HEK293 (cell line): ENCODE measurements at regions of chr20 and their contacts with region 1.

Region 1: GRCh38 chr20:46013826-46014516 is 5.3 kb downstream of the MMP9 start:
- H3K4me3 ChIP-seq: peak overlapping the region; percentile 24
- H3K27ac ChIP-seq: no peak overlapping the region
- H3K4me1 ChIP-seq: no peaks in the 10 kb centered on the region
- CTCF ChIP-seq: peak; percentile 79; the same call in 1 of the 2 replicates

Region 2: GRCh38 chr20:45564760-45565276 is 449.2 kb before region 1 on chr20:
- CTCF ChIA-PET with region 1: no interaction called
- POLR2A ChIA-PET with region 1: no interaction called
- H3K4me3 ChIP-seq: no peak overlapping the region
- H3K27ac ChIP-seq: no peak overlapping the region
- H3K4me1 ChIP-seq: no peaks in the 10 kb centered on the region
- CTCF ChIP-seq: no peak

Region 3: DNA sequence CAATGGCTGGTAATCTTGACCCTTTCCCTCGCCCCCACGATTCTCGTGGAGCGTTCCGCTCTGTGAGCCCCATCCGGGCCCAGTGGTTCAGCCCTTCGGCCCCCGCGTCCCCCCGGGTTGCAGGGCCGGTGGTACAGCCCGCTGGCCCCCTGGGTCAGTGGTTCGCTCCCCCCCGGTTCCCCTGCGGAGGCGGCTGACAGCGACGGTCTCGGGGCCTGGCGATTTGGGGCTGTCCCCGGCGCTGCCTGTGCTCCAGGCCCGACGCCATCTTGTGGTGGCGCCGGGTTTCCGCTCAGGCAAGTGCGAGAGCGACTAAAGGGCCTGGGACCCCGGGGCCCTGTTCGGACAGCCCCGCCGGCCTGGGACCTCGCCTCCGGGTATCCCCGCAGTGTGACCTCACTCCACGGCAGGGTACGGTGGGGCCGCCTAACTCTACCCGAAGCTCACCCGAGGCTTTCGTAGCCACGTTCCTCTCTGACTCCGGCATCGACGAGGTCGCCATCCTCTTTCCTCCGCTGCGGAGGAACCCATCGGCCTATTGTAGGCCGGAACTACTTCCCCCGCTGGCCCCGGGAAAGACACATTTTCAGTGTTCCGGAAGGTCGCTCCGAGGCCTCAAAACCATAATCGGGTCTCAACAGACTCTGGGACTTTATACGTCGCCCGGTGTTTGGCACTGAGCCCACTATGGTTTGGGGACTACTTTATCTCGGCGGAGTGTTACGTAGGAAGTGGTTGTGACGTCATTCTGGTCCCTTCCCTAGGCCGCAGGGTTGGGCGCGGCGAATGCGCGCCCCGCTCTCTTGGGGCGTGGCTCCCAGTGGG is 42.1 kb before region 1 on chr20 and contains the start of gene ZNF335:
- CTCF ChIA-PET with region 1: interaction called, 24 read pairs
- POLR2A ChIA-PET with region 1: no interaction called
- H3K4me3 ChIP-seq: peak within 1 kb of the TSS; percentile 90
- H3K27ac ChIP-seq: peak within 1 kb of the TSS; percentile 92
- H3K4me1 ChIP-seq: no peaks in the 10 kb centered on the region
- CTCF ChIP-seq: peak; percentile 44; the same call in 1 of the 2 replicates

Region 4: DNA sequence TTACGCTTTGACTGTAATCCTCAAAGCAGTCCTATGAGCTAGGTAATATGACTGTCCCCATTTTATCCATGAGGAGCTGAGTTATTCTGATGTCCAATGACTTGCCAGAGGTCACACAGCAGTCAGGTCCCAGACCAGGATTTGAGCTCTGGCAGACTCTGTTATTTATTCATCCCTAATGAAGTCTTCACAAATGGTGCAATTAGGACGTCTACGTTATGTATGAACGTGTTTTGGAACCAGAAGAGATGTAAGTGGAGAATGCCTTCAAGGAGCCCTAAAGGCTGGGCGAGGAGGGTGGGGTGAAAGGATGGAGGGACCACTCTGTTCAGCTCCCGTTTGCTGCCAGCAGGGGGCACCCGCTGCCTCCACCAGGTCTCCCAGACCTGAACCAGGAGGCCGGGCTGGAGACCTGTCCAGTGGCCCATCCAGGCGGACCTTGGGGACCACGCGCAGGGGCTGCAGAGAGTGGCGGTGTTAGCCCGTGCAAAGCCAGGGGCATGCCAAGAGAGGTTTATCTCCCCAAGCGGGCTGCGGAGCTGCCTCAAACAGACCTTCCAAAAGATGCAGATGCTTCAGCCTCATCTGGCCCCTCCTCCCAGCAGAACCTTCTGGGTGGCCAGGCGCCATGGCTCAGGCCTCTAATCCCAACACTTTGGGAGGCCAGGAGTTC is 26.7 kb before region 1 on chr20:
- CTCF ChIA-PET with region 1: interaction called, 86 read pairs
- POLR2A ChIA-PET with region 1: interaction called, 7 read pairs
- H3K4me3 ChIP-seq: no peak overlapping the region
- H3K27ac ChIP-seq: no peak overlapping the region
- H3K4me1 ChIP-seq: no peaks in the 10 kb centered on the region
- CTCF ChIP-seq: peak; percentile 76

Region 5: DNA sequence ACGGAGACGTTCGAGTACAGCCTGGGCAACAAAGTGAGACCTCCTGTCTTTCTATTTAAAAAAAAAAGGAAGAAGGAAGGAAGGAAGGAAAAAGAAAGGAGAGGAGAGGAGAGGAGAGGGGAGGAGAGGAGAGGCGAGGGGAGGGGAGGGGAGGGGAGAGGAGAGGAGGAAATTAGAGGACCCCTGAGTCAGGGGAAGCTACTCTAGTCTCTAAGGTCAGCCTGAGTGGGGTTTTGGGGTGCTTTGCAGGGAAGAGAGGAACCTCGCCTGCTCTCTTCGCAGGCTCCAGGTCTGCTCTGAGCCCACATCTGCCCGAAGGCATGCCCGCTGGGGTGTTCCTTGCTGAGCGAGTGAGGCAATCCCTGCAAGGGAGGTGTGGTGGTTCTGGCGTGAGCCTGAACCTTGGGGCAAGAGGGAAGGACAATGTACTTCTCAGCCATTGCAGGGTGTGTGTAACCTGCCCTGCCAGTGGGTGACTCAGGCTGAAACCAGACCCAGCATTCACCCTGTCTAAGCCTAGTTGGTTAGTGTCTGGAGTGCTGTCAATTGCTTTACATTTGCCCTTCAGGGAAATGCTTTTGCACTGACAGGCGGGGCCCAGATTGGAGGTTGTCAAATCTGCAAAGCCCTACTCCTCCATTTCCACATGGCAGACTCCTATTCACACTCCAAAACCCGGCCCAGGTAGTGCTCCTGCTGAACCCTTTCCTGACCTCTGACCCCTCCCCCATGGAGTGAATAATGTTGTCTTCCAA is 20.6 kb before region 1 on chr20:
- CTCF ChIA-PET with region 1: interaction called, 86 read pairs
- POLR2A ChIA-PET with region 1: no interaction called
- H3K4me3 ChIP-seq: no peak overlapping the region
- H3K27ac ChIP-seq: no peak overlapping the region
- H3K4me1 ChIP-seq: no peaks in the 10 kb centered on the region
- CTCF ChIP-seq: no peak

Region 6: DNA sequence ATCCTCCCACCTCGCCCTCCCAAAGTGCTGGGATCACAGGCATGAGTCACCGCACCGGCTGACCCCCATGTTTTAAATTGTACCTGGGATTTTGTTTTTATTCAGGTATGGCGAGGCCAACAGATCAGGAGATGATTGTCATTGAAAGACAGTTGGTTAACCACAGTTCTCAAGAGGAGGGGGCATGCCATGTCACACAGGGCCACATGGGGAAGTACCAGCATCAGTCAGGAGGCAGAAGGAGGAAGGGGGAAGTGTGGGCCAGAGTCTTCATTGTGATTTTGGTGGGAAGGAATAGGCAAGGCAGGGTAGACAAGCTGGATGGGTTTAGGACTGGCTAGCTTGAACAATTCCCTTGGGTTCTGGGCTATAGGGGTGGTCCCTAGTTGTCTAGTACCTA is 15.2 kb before region 1 on chr20:
- CTCF ChIA-PET with region 1: interaction called, 49 read pairs
- POLR2A ChIA-PET with region 1: no interaction called
- H3K4me3 ChIP-seq: no peak overlapping the region
- H3K27ac ChIP-seq: no peak overlapping the region
- H3K4me1 ChIP-seq: no peaks in the 10 kb centered on the region
- CTCF ChIP-seq: no peak

Region 7: GRCh38 chr20:46089417-46090388 is 75.7 kb after region 1 on chr20 and contains the start of gene NCOA5:
- CTCF ChIA-PET with region 1: interaction called, 18 read pairs
- POLR2A ChIA-PET with region 1: no interaction called
- H3K4me3 ChIP-seq: peak within 1 kb of the TSS; percentile 95
- H3K27ac ChIP-seq: peak within 1 kb of the TSS; percentile 87
- H3K4me1 ChIP-seq: peaks cover 22% of the 10 kb centered on the region
- CTCF ChIP-seq: peak; percentile 72; the same call in 1 of the 2 replicates

Region 8: GRCh38 chr20:46174469-46175128 is 160.6 kb after region 1 on chr20:
- CTCF ChIA-PET with region 1: interaction called, 10 read pairs
- POLR2A ChIA-PET with region 1: no interaction called
- H3K4me3 ChIP-seq: no peak overlapping the region
- H3K27ac ChIP-seq: no peak overlapping the region
- H3K4me1 ChIP-seq: no peaks in the 10 kb centered on the region
- CTCF ChIP-seq: peak; percentile 8; the same call in 1 of the 2 replicates

Region 9: GRCh38 chr20:46994341-46994740 is 980.4 kb after region 1 on chr20:
- CTCF ChIA-PET with region 1: no interaction called
- POLR2A ChIA-PET with region 1: no interaction called
- H3K4me3 ChIP-seq: no peak overlapping the region
- H3K27ac ChIP-seq: no peak overlapping the region
- H3K4me1 ChIP-seq: no peaks in the 10 kb centered on the region
- CTCF ChIP-seq: no peak